Aorta (tissue), 5 donors: ENCODE measurements at regions of chr21 and their contacts with region 1.

Region 1: DNA sequence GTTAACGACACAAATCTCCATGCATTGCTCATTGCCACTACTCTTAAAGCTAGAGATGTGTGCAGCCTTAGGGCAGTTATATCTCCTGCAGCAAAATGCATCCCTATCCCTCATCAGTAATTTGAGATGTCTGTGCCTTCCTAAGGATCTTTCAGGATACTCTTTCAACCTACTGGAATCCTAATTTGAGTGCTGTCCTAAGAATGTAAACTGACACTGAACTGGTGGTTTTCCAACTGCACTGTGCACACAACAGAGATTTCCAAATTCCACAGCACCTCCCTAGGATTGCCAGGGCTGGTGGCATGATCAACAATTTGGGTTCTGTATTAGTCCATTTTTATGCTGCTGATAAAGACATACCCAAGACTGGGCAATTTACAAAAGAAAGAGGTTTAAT is 193.9 kb downstream of the LTN1 start:
- DNase-seq: no peak
- ATAC-seq: no peak
- H3K4me3 ChIP-seq: no peak overlapping the region
- H3K27ac ChIP-seq: no peak overlapping the region
- H3K4me1 ChIP-seq: peaks cover 4 to 5% of the 10 kb centered on the region in 2 donors
- H3K27me3 ChIP-seq: no peaks in the 10 kb centered on the region

Region 2: DNA sequence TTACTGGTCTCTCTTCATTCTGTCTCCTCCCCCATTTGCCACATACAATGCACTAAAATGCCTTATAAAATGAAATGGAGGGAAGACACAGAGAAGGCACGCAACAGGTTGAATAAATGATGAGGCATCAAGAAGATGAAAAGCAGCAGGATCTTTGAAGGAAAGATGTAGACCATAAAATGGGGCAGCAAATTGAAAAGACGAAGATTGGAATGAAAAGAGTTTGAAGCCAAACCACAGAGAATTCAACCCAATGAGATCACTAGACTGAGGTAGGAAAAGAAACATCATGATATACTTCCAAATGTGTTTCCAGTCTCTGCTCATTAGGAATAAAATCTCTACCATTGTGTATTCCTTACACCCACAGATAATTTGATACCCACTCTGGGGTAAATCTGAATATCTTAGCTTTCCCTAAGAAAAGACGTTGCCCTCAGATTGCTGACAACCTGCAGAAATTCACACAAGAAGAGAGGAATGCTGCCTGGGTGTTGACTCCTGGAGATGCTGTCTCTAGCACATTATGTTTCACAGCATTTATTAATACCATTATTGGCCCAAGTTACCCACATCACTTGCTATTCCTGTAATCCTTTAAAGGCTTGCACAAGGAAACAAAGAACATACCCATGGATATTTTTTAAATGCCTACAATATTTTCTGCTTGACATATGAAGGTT is 37.0 kb before region 1 on chr21:
- intact Hi-C with region 1: loop called in 1 of 2 experiments (anchors 5 kb)
- DNase-seq: no peak
- ATAC-seq: no peak
- H3K4me3 ChIP-seq: no peak overlapping the region
- H3K27ac ChIP-seq: no peak overlapping the region
- H3K4me1 ChIP-seq: peaks cover 3 to 7% of the 10 kb centered on the region in 2 donors
- H3K27me3 ChIP-seq: no peaks in the 10 kb centered on the region

Region 3: DNA sequence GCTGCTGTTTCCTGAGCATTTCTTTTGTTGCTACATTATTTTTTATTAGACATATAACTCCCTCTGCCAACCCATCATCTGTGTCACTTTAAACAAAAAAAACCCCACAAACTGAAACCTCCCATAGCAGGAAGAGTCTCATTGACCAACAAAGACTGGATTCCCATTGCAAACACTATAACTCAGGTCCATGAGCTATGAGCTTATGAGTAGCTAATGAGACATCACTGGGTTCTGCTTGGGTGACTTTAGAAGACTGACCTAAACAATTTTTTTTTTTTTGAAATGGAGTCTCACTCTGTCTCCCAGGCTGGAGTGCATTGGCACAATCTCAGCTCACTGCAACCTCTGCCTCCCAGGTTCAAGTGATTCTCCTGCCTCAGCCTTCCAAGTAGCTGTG is 18.9 kb before region 1 on chr21:
- intact Hi-C with region 1: loop called in 1 of 2 experiments (anchors 2 kb)
- DNase-seq: no peak
- ATAC-seq: no peak
- H3K4me3 ChIP-seq: no peak overlapping the region
- H3K27ac ChIP-seq: no peak overlapping the region
- H3K4me1 ChIP-seq: peaks cover 0 to 3% of the 10 kb centered on the region in 2 donors
- H3K27me3 ChIP-seq: no peaks in the 10 kb centered on the region